ENCODE measurements at regions of chr5 and their contacts with region 1.

Region 1: GRCh38 chr5:74648835-74649293 is 8.3 kb upstream of the ENC1 start:
- DNase-seq: peak in 1 of 2 donors; percentile 80
- ATAC-seq: peak; percentile 85 to 95 (median 93)
- H3K4me3 ChIP-seq: no peak overlapping the region
- H3K4me3 Mint-ChIP-seq: no peak overlapping the region
- H3K27ac ChIP-seq: no peak overlapping the region
- H3K27ac Mint-ChIP-seq: no peak overlapping the region
- H3K4me1 ChIP-seq: no peaks in the 10 kb centered on the region
- H3K4me1 Mint-ChIP-seq: peaks cover 4 to 5% of the 10 kb centered on the region in 2 donors
- H3K27me3 ChIP-seq: peaks cover 2% of the 10 kb centered on the region
- H3K27me3 Mint-ChIP-seq: no peaks in the 10 kb centered on the region
- CTCF ChIP-seq: peak; percentile 89

Region 2: DNA sequence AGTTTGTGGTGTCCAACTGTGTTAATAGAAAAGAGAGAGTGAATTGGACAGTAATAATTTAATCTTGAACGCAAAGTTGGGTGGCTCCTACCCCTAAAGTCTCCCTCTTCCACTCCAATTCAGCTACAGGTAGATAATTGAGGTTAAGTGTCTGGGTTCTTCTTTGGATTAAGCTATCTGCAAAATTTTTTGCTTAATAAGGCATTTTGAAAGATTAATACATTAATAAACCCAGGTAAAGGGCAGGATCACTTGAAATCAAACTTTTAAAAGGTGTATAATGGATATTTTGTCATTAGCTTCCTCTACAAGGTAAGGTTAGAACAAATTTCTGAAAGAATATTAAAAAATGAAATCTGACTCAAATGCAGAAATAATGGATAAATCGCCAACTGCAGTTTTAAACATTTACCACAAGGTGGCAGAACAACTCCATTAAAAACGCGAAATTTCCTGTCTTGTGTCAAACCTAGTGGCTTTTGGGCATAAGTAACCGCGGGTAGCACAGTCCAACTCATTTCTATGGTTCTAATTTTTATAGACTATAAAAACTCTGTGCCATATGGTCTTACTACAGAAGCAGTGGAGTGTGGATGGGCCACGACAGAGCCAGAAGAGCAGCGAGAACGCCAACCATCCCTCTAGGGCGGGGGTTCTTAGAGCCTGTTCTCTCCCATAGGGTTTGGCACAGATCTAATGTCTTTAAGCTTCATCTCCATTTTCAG is 746.4 kb before region 1 on chr5:
- intact Hi-C with region 1: loop called (anchors 1 kb)
- DNase-seq: peak in 1 of 2 donors; percentile 74
- ATAC-seq: peak in 2 of 3 donors; percentile 53 to 57
- H3K4me3 ChIP-seq: no peak overlapping the region
- H3K4me3 Mint-ChIP-seq: no peak overlapping the region
- H3K27ac ChIP-seq: no peak overlapping the region
- H3K27ac Mint-ChIP-seq: no peak overlapping the region
- H3K4me1 ChIP-seq: no peaks in the 10 kb centered on the region
- H3K4me1 Mint-ChIP-seq: no peaks in the 10 kb centered on the region
- H3K27me3 ChIP-seq: no peaks in the 10 kb centered on the region
- H3K27me3 Mint-ChIP-seq: peaks cover 0 to 3% of the 10 kb centered on the region in 2 donors
- CTCF ChIP-seq: peak; percentile 90

Region 3: DNA sequence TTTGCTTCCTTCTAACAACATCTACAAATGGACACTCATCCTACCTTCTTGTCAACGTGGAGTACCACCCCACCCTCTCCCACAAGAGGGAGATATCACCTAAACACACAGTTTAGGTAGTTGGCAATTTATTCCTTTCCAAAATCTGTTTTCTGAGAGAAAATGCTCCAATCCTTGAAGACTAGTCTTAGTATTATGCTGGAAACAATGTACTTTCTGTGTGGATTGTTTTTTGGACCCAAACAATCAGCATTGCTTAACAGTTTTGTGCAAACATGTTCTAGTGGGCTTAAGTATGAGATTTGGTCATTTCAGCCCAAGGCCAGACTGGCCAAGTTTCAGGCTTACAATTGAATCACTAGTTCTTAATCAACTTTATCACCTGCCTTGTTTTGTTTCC is 663.7 kb before region 1 on chr5:
- intact Hi-C with region 1: loop called (anchors 1 kb)
- DNase-seq: peak in 1 of 2 donors; percentile 2
- ATAC-seq: no peak
- H3K4me3 ChIP-seq: no peak overlapping the region
- H3K4me3 Mint-ChIP-seq: no peak overlapping the region
- H3K27ac ChIP-seq: no peak overlapping the region
- H3K27ac Mint-ChIP-seq: no peak overlapping the region
- H3K4me1 ChIP-seq: no peaks in the 10 kb centered on the region
- H3K4me1 Mint-ChIP-seq: no peaks in the 10 kb centered on the region
- H3K27me3 ChIP-seq: no peaks in the 10 kb centered on the region
- H3K27me3 Mint-ChIP-seq: peaks cover 0 to 20% of the 10 kb centered on the region in 2 donors
- CTCF ChIP-seq: no peak

Region 4: DNA sequence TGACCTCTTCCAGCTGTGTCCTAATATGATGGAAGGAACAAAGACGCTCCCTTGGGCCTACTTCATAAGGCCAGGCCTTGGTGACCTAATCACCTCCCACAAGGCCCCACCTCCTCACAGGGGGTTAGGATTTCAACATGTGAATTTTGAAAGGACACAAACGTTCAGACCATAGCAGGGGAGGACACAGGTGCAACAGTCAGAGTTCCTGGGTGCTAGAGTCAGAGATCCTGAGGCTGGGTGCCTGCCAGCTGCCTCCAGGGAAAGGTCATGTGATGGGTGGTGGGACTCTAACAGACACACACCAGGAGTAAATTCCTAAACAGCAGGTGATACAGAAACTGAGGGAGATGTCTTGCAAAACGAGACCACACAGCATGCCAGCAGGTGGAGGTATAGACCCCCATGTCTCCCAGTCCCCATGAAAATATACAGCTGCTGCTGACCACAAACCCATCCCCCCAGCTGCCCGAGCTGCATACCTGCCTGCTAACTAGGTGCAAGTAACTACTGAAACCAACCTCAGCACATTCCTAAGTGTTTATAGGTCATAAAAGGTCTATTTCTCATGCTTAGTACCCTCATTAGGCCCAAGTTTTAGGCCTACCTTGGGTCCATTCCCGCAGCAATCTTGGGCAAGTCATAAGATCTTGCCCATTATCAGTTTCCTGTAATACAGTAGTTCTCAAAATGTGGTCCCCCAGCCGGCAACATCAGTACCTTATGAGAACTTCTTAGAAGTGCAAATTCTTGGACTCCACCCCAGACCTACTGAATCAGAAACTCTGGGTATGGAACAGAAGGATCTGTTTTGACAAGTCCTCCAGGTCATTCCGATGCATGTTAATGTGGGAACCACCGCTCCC is 253.7 kb before region 1 on chr5:
- intact Hi-C with region 1: loop called (anchors 2 kb)
- DNase-seq: peak in 1 of 2 donors; percentile 10
- ATAC-seq: no peak
- H3K4me3 ChIP-seq: no peak overlapping the region
- H3K4me3 Mint-ChIP-seq: no peak overlapping the region
- H3K27ac ChIP-seq: no peak overlapping the region
- H3K27ac Mint-ChIP-seq: no peak overlapping the region
- H3K4me1 ChIP-seq: no peaks in the 10 kb centered on the region
- H3K4me1 Mint-ChIP-seq: peaks cover 0 to 7% of the 10 kb centered on the region in 2 donors
- H3K27me3 ChIP-seq: no peaks in the 10 kb centered on the region
- H3K27me3 Mint-ChIP-seq: no peaks in the 10 kb centered on the region
- CTCF ChIP-seq: no peak

Region 5: GRCh38 chr5:75202935-75203334 is 554.1 kb after region 1 on chr5:
- intact Hi-C with region 1: no loop called
- DNase-seq: no peak
- ATAC-seq: no peak
- H3K4me3 ChIP-seq: no peak overlapping the region
- H3K4me3 Mint-ChIP-seq: no peak overlapping the region
- H3K27ac ChIP-seq: no peak overlapping the region
- H3K27ac Mint-ChIP-seq: no peak overlapping the region
- H3K4me1 ChIP-seq: no peaks in the 10 kb centered on the region
- H3K4me1 Mint-ChIP-seq: no peaks in the 10 kb centered on the region
- H3K27me3 ChIP-seq: no peaks in the 10 kb centered on the region
- H3K27me3 Mint-ChIP-seq: peaks cover 0 to 3% of the 10 kb centered on the region in 2 donors
- CTCF ChIP-seq: no peak